ENCODE measurements at regions of chr5 and their contacts with region 1.

Region 1: GRCh38 chr5:163505368-163506094 is at the start of gene MAT2B:
- DNase-seq: peak; percentile 97
- H3K4me3 ChIP-seq: peak within 1 kb of the TSS; percentile 63 to 94 (median 74)
- H3K27ac ChIP-seq: peak within 1 kb of the TSS; percentile 89 to 98 (median 95)
- H3K4me1 ChIP-seq: peaks cover 0 to 61% (median 48%) of the 10 kb centered on the region in 4 donors
- H3K27me3 ChIP-seq: no peaks in the 10 kb centered on the region
- CTCF ChIP-seq: peak in 1 of 4 experiments; percentile 25
- EP300 ChIP-seq: peak in 1 of 4 donors; percentile 23
- POLR2A ChIP-seq: peak; percentile 83 to 91
- total RNA-seq, gene MAT2B: 41.5 to 90.3 (median 67.4) TPM

Region 2: GRCh38 chr5:163437309-163438182 is 68.0 kb before region 1 on chr5 and contains the start of gene CCNG1:
- intact Hi-C with region 1: loop called (anchors 2 kb)
- DNase-seq: peak; percentile 96
- H3K4me3 ChIP-seq: peak within 1 kb of the TSS; percentile 67 to 95 (median 90)
- H3K27ac ChIP-seq: peak within 1 kb of the TSS; percentile 84 to 88 (median 88)
- H3K4me1 ChIP-seq: peaks cover 0 to 27% (median 18%) of the 10 kb centered on the region in 4 donors
- H3K27me3 ChIP-seq: no peaks in the 10 kb centered on the region
- CTCF ChIP-seq: no peak
- EP300 ChIP-seq: no peak
- POLR2A ChIP-seq: peak; percentile 60 to 74
- total RNA-seq, gene CCNG1: 119 to 181 (median 133) TPM

Region 3: DNA sequence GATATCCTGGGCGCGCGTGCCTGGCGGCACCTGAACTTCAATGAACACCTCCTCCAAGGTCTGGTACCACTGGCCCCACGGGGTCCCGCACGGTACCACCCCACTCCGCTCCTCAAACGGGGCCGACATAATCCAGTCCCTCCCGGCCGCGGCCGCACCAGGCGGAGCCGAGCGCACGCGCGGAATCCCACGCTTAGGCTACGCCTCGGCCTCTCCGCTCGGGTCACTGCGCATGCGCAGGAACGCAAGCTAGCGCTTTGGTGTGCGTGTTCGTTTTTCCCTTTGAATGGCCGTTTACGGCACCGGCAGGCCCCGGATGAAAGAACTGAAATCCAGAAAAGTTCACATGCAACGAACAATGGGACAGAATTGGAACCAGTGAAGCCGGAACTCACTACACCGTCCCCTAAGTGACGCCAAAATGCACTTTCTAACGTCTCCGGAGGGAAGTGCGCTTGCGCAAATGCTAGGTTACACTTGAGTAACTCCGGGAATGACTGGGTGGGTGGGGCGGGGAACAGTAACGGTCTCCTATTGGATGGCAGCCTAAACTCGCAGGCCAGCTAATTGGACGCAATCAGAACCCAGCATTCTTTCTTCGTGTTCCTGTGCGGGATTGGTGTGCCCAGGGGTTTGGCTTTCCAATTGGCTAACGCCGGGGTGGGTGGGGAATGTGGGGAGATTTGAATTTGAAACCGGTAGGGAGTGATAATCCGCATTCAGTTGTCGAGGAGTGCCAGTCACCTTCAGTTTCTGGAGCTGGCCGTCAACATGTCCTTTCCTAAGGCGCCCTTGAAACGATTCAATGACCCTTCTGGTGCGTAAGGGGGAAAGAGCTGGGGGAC is 45.4 kb before region 1 on chr5 and contains the starts of genes HMMR and NUDCD2:
- intact Hi-C with region 1: loop called (anchors 1 kb)
- DNase-seq: peak; percentile 98
- H3K4me3 ChIP-seq: peak within 1 kb of the TSS; percentile 68 to 88 (median 78)
- H3K27ac ChIP-seq: peak within 1 kb of the TSS; percentile 95 to 97 (median 96)
- H3K4me1 ChIP-seq: peaks cover 0 to 33% (median 20%) of the 10 kb centered on the region in 4 donors
- H3K27me3 ChIP-seq: no peaks in the 10 kb centered on the region
- CTCF ChIP-seq: peak in 1 of 4 experiments; percentile 24
- EP300 ChIP-seq: no peak
- POLR2A ChIP-seq: peak; percentile 78 to 84
- total RNA-seq, gene HMMR: 1.1 to 3.0 TPM in 2 of 4 donors, not detected in the others
- total RNA-seq, gene NUDCD2: 3.3 to 13.2 (median 8.1) TPM

Measured in sigmoid colon (tissue), 7 donors.